ENCODE measurements at regions of chr3 and their contacts with region 1.

Region 1: DNA sequence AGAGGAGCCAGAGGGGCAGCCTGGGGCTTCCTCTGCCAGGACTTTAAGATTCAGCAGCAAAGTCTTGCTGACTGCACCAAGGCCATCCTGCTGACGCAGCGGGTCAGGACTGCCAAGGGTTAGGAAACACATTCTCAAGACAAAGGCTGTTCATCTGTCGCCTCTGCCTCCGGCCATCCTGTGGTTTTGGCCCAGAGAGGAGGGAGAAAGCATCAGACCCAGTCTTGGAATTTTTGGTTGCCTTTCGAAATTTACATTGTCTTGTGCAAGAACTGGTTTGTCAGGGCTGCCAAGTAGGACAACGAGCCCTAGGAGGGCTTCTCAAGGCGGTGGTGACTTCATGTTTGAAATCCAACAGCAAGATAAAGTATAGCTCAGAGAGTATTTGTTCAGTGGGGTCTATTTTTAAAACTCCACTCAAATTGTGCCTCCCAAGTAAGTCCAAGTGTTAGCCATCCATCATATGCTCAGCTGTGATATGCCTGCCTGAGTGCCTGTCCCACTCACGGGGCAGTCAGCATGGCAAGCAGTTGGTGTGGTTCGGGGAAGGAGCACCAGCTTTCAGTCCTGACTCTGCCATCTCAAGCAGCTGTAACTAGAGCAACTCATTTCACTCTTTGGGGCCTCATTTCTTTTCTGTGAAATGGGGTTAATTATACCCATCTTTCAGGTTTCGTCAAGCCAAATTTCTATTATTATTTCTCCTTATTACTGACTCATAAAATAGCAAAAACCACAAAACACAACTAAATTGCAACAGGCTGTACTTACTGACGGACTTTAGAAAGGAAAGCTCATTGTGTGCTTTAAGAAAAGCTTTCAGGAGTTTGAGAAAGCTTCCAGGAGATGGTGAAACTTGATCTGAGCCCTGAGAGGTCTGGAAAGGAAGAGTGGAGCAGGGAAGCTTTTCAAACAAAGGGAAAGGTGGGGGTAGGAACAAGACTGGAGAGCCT is 42.4 kb upstream of the RHO start:
- DNase-seq: peak; percentile 98

Region 2: GRCh38 chr3:129413687-129414506 is 72.1 kb before region 1 on chr3:
- intact Hi-C with region 1: no loop called
- DNase-seq: no peak

Region 3: GRCh38 chr3:129439817-129440617 is 46.0 kb before region 1 on chr3 and contains the starts of genes IFT122 and MBD4:
- intact Hi-C with region 1: loop called in 1 of 2 experiments (anchors 1 kb)
- DNase-seq: peak; percentile 99
- total RNA-seq, gene IFT122: 22.0 to 22.5 TPM
- total RNA-seq, gene MBD4: 23.1 to 24.9 TPM

Region 4: GRCh38 chr3:129507181-129507831 is 21.3 kb after region 1 on chr3:
- intact Hi-C with region 1: no loop called
- DNase-seq: no peak

Region 5: DNA sequence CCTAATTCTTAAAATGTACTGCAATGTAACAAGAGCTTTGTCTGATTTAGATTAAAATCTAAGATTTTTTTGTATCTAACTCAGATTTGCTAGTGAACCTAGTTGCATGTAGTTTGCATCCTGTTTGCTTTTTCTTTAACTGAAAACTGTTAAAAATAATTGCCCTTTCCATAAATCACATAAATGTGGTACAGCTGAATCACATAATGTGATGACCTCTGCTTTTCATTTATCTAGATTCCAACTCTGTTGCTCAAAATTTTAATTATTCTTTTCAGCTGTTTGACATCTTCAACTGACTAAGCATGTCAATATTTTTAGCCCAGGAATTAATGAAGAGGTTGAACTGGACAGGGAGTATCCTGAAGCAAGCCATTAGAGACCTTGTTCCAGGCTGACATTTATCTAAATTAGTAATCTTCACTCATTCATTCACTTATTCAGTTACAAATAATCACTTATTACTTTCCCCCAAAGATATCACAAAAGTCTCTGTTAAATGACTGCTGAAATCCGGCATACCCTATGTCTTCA is 222.4 kb after region 1 on chr3:
- intact Hi-C with region 1: no loop called
- DNase-seq: no peak

Region 6: DNA sequence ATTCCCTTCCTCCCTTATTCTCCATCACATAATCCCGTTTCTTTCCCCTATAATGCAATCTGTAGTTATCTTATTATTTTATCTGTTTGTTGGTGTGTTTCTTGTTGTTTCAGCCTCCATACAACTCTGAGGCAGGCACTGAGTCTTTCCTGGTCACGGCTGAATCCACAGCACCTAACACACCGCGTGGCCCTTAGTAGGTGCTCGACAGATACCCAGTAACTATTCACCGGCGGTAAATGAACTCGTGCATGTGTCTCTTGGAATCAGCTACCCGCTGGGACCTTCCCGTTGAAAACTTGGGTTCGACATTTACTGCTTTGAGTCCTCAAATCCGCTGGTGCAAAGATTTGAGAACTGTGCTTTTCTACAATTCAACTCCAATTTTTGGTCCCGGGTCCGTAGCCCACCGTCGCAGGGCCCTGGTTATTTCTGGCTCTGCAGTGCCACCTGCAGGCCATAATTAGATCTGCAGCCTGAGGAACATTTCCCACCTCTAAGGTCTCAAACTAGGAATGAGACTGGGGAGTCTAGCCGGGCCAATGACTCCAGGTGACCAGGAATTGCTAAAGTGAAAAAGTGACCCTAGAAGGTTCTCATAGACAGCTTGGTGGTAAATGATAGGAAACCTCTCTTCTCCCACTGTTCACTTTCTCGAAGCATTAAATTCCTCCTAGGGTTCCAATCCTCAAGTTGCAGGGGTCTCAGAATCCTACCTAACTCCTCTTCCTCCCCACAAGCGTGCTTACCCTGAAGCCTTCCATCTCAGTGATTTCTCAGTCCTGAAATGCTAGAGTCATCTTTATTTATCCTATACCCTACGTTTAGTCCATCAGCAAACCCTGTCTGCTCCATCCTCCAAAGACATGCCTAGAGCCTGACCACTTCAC is 448.5 kb after region 1 on chr3:
- intact Hi-C with region 1: loop called in 1 of 2 experiments (anchors 10 kb)
- DNase-seq: no peak

Measured in posterior vena cava (tissue), 2 donors.